Sigmoid colon (tissue), 7 donors: ENCODE measurements at regions of chr1 and their contacts with region 1.

Region 1: GRCh38 chr1:226786550-226786949 is 47.5 kb upstream of the ITPKB start:
- DNase-seq: no peak
- H3K4me3 ChIP-seq: no peak overlapping the region
- H3K27ac ChIP-seq: peak overlapping the region; percentile 57 to 90 (median 87)
- H3K4me1 ChIP-seq: peaks cover 0 to 61% (median 48%) of the 10 kb centered on the region in 4 donors
- H3K27me3 ChIP-seq: no peaks in the 10 kb centered on the region
- CTCF ChIP-seq: no peak
- EP300 ChIP-seq: no peak
- POLR2A ChIP-seq: no peak

Region 2: DNA sequence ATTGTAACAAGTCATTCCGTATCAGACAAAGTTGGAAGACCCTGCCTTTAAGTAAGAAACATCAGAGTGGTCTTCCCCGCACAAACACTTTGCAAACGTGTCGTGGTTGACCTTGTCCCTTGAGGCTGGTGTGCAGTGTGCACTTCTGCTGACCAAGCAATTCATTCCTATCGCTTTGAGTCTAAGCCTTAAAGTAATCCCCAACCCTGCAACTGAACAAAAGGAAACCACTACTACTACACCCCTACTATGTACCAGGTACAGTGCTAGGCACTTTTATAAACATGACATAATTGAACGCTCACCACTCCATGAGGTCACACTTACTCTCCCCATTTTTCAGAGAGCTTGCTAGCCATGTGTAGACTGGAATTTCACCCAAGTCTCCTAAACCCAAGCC is 58.1 kb before region 1 on chr1:
- intact Hi-C with region 1: no loop called
- DNase-seq: no peak
- H3K4me3 ChIP-seq: no peak overlapping the region
- H3K27ac ChIP-seq: peak overlapping the region; percentile 40 to 95 (median 79)
- H3K4me1 ChIP-seq: peaks cover 0 to 98% (median 89%) of the 10 kb centered on the region in 4 donors
- H3K27me3 ChIP-seq: no peaks in the 10 kb centered on the region
- CTCF ChIP-seq: no peak
- EP300 ChIP-seq: no peak
- POLR2A ChIP-seq: no peak

Region 3: DNA sequence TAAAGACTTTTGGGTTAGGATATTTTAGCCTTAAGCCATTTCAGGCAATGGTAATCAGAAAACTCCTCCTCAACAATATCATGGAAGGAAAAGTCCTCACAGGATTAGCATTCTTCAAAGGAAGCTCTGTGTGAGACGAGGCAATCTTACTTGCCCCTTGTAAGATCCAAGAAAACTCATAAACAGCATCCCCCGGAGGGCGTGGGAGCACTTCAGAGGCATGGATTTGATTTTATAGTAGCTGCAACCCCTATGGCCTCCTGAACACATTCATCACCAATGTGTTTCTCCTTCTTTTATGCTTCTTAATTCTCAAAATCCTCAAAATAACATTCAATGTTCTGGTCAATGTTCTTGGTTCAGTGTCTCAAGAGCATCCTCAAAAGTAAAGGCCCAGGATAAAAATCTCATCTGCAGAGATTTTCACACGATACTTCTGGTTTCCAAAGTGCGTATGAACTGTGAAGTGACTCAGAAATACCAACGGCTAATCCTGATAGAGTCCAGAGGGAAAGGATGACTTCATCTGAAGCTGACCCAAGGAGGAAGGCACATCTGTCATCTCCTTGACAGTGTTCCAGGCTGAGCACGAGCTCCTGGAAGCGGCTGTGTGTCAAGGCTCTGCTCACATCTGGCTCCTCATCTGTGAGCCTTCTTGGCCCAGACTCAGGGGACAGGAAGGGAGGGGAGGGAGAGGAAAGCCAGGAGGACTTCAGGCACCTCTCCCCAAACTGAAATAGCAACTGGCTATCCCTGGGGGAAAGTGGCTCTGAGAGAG is 34.6 kb after region 1 on chr1:
- intact Hi-C with region 1: loop called (anchors 2 kb)
- DNase-seq: peak; percentile 99
- H3K4me3 ChIP-seq: no peak overlapping the region
- H3K27ac ChIP-seq: peak overlapping the region; percentile 87 to 93 (median 90)
- H3K4me1 ChIP-seq: peaks cover 0 to 34% (median 28%) of the 10 kb centered on the region in 4 donors
- H3K27me3 ChIP-seq: no peaks in the 10 kb centered on the region
- CTCF ChIP-seq: no peak
- EP300 ChIP-seq: peak; percentile 97 to 100 (median 98)
- POLR2A ChIP-seq: no peak